CD8-positive, alpha-beta T cell (primary cell): ENCODE measurements at regions of chr7 and their contacts with region 1.

Region 1: DNA sequence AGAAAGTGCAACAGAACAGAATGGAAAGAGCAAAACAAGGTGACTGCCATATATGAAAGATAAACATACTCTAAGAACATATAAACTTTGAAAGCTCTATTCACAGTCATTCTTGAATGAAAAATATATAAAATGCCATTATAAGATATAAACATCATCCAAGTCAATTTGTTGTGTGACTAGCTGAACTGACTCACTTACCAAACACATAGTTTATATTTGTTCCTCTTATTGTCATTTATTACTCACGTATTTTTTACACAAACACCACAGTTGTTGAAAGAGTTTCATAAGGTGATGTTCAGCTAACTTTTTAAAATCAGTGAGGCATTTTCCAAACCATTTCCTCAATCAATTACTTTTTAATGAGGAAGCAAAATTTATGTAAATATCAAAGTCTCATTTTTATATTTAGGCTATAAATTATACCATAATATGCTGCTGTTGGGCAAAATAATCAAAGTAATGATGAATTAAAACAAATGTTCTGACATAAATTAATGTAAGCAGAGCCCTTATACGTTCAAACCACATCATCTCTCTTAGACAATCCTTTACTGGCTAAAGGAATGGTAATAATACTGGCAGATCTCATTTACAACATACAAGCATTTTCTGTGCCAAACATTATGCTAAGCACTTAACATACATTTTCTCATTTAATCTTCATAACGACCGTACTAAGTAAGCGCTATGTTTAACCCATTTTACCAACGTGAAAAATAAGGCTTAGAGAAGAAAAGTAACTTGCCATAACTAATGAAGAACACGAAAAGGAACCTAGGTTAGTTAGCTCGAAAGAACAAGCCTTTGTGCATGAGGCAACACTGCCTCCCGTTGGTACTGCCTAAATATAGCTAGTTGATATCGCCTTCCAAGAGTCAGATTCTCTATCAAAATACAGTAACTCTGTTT is 7.3 kb downstream of the LRRN3 start:
- DNase-seq: peak; percentile 28 to 81 (median 64)
- ATAC-seq: peak; percentile 95
- H3K4me3 ChIP-seq: no peak overlapping the region
- H3K4me3 Mint-ChIP-seq: peak overlapping the region; percentile 74
- H3K27ac ChIP-seq: no peak overlapping the region
- H3K27ac Mint-ChIP-seq: peak overlapping the region; percentile 84
- H3K4me1 ChIP-seq: peaks cover 44% of the 10 kb centered on the region
- H3K4me1 Mint-ChIP-seq: peaks cover 59% of the 10 kb centered on the region
- H3K27me3 ChIP-seq: no peaks in the 10 kb centered on the region
- H3K27me3 Mint-ChIP-seq: no peaks in the 10 kb centered on the region
- CTCF ChIP-seq: peak; percentile 88

Region 2: GRCh38 chr7:110090110-110090769 is 1008.0 kb before region 1 on chr7:
- CTCF ChIA-PET with region 1: no interaction called
- POLR2A ChIA-PET with region 1: no interaction called
- intact Hi-C with region 1: loop called (anchors 2 kb)
- DNase-seq: peak in 2 of 9 experiments; percentile 9 to 33
- ATAC-seq: no peak
- H3K4me3 ChIP-seq: no peak overlapping the region
- H3K4me3 Mint-ChIP-seq: no peak overlapping the region
- H3K27ac ChIP-seq: no peak overlapping the region
- H3K27ac Mint-ChIP-seq: no peak overlapping the region
- H3K4me1 ChIP-seq: no peaks in the 10 kb centered on the region
- H3K4me1 Mint-ChIP-seq: no peaks in the 10 kb centered on the region
- H3K27me3 ChIP-seq: no peaks in the 10 kb centered on the region
- H3K27me3 Mint-ChIP-seq: no peaks in the 10 kb centered on the region
- CTCF ChIP-seq: peak; percentile 11

Region 3: GRCh38 chr7:110461621-110462020 is 636.6 kb before region 1 on chr7:
- CTCF ChIA-PET with region 1: no interaction called
- POLR2A ChIA-PET with region 1: no interaction called
- intact Hi-C with region 1: loop called in 1 of 2 experiments (anchors 10 kb)
- DNase-seq: no peak
- ATAC-seq: no peak
- H3K4me3 ChIP-seq: no peak overlapping the region
- H3K4me3 Mint-ChIP-seq: no peak overlapping the region
- H3K27ac ChIP-seq: no peak overlapping the region
- H3K27ac Mint-ChIP-seq: no peak overlapping the region
- H3K4me1 ChIP-seq: no peaks in the 10 kb centered on the region
- H3K4me1 Mint-ChIP-seq: no peaks in the 10 kb centered on the region
- H3K27me3 ChIP-seq: no peaks in the 10 kb centered on the region
- H3K27me3 Mint-ChIP-seq: no peaks in the 10 kb centered on the region
- CTCF ChIP-seq: no peak

Region 4: GRCh38 chr7:110595690-110596325 is 502.5 kb before region 1 on chr7:
- CTCF ChIA-PET with region 1: interaction called, 28 read pairs
- POLR2A ChIA-PET with region 1: interaction called, 5 read pairs
- intact Hi-C with region 1: loop called (anchors 1 to 2 kb)
- DNase-seq: peak in 2 of 9 experiments; percentile 13 to 38
- ATAC-seq: no peak
- H3K4me3 ChIP-seq: no peak overlapping the region
- H3K4me3 Mint-ChIP-seq: no peak overlapping the region
- H3K27ac ChIP-seq: no peak overlapping the region
- H3K27ac Mint-ChIP-seq: no peak overlapping the region
- H3K4me1 ChIP-seq: no peaks in the 10 kb centered on the region
- H3K4me1 Mint-ChIP-seq: no peaks in the 10 kb centered on the region
- H3K27me3 ChIP-seq: no peaks in the 10 kb centered on the region
- H3K27me3 Mint-ChIP-seq: no peaks in the 10 kb centered on the region
- CTCF ChIP-seq: no peak

Region 5: DNA sequence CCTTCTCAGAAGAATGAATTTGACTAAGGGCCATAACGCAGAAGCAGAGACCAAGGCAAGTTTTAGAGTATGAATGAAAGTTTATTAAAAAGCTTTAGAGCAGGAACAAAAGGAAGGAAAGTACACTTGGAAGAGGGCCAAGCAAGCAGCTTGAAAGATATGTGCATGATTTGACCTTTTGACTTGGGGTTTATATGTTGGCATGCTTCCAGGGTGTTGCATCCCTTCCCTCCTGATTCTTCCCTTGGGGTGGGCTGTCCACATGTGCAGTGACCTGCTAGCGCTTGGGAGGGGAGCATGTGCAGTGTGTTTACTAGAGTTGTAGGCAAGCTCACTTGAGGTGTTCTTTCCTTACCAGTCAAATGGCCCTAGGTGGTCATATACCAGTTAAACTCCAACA is 45.2 kb before region 1 on chr7:
- CTCF ChIA-PET with region 1: no interaction called
- POLR2A ChIA-PET with region 1: no interaction called
- intact Hi-C with region 1: no loop called
- DNase-seq: no peak
- ATAC-seq: no peak
- H3K4me3 ChIP-seq: no peak overlapping the region
- H3K4me3 Mint-ChIP-seq: no peak overlapping the region
- H3K27ac ChIP-seq: no peak overlapping the region
- H3K27ac Mint-ChIP-seq: no peak overlapping the region
- H3K4me1 ChIP-seq: peaks cover 19% of the 10 kb centered on the region
- H3K4me1 Mint-ChIP-seq: peaks cover 36% of the 10 kb centered on the region
- H3K27me3 ChIP-seq: no peaks in the 10 kb centered on the region
- H3K27me3 Mint-ChIP-seq: no peaks in the 10 kb centered on the region
- CTCF ChIP-seq: no peak

Region 6: GRCh38 chr7:111083413-111083812 is 14.9 kb before region 1 on chr7:
- CTCF ChIA-PET with region 1: interaction called, 14 read pairs
- POLR2A ChIA-PET with region 1: interaction called, 15 read pairs
- intact Hi-C with region 1: no loop called
- DNase-seq: peak in 7 of 9 experiments; percentile 27 to 91 (median 53)
- ATAC-seq: peak; percentile 94
- H3K4me3 ChIP-seq: peak overlapping the region in 1 of 2 experiments; percentile 17
- H3K4me3 Mint-ChIP-seq: peak overlapping the region; percentile 59
- H3K27ac ChIP-seq: peak overlapping the region in 1 of 2 experiments; percentile 33
- H3K27ac Mint-ChIP-seq: peak overlapping the region; percentile 89
- H3K4me1 ChIP-seq: peaks cover 62% of the 10 kb centered on the region
- H3K4me1 Mint-ChIP-seq: peaks cover 69% of the 10 kb centered on the region
- H3K27me3 ChIP-seq: no peaks in the 10 kb centered on the region
- H3K27me3 Mint-ChIP-seq: no peaks in the 10 kb centered on the region
- CTCF ChIP-seq: no peak

Region 7: GRCh38 chr7:111561885-111562732 is 463.8 kb after region 1 on chr7 and contains the start of gene IMMP2L:
- CTCF ChIA-PET with region 1: no interaction called
- POLR2A ChIA-PET with region 1: no interaction called
- intact Hi-C with region 1: loop called in 1 of 2 experiments (anchors 10 kb)
- DNase-seq: peak; percentile 82 to 95 (median 90)
- ATAC-seq: peak; percentile 95
- H3K4me3 ChIP-seq: peak within 1 kb of the TSS; percentile 61 to 85
- H3K4me3 Mint-ChIP-seq: peak within 1 kb of the TSS; percentile 92
- H3K27ac ChIP-seq: peak within 1 kb of the TSS; percentile 77 to 82
- H3K27ac Mint-ChIP-seq: peak within 1 kb of the TSS; percentile 96
- H3K4me1 ChIP-seq: peaks cover 18% of the 10 kb centered on the region
- H3K4me1 Mint-ChIP-seq: peaks cover 43% of the 10 kb centered on the region
- H3K27me3 ChIP-seq: no peaks in the 10 kb centered on the region
- H3K27me3 Mint-ChIP-seq: peaks cover 3% of the 10 kb centered on the region
- CTCF ChIP-seq: peak; percentile 15
- total RNA-seq, gene IMMP2L: 9.8 to 12.7 TPM